ENCODE measurements at regions of chr14 and their contacts with region 1.

Region 1: GRCh38 chr14:75487155-75487671 is 35.1 kb upstream of the BATF start:
- DNase-seq: no peak
- ATAC-seq: no peak
- H3K4me3 ChIP-seq: no peak overlapping the region
- H3K27ac ChIP-seq: peak overlapping the region in 1 of 2 experiments; percentile 4; a peak in 1 of 6 replicates
- H3K4me1 ChIP-seq: peaks cover 8% of the 10 kb centered on the region; the same call in 2 of the 3 replicates
- CTCF ChIP-seq: no peak
- EP300 ChIP-seq: no peak
- POLR2A ChIP-seq: no peak
- RAD21 ChIP-seq: no peak

Region 2: GRCh38 chr14:74886001-74886400 is 601.2 kb before region 1 on chr14:
- CTCF ChIA-PET with region 1: no interaction called
- POLR2A ChIA-PET with region 1: no interaction called
- DNase-seq: no peak
- ATAC-seq: no peak
- H3K4me3 ChIP-seq: no peak overlapping the region
- H3K27ac ChIP-seq: no peak overlapping the region
- H3K4me1 ChIP-seq: peaks cover 59% of the 10 kb centered on the region
- CTCF ChIP-seq: no peak
- EP300 ChIP-seq: no peak
- POLR2A ChIP-seq: no peak
- RAD21 ChIP-seq: no peak

Region 3: GRCh38 chr14:75307700-75308379 is 179.4 kb before region 1 on chr14:
- CTCF ChIA-PET with region 1: interaction called, 216 read pairs
- POLR2A ChIA-PET with region 1: no interaction called
- DNase-seq: peak; percentile 64 to 85
- ATAC-seq: peak; percentile 89 to 91
- H3K4me3 ChIP-seq: no peak overlapping the region
- H3K27ac ChIP-seq: peak overlapping the region; percentile 51 to 66; a peak in 4 of 6 replicates
- H3K4me1 ChIP-seq: peaks cover 29% of the 10 kb centered on the region
- CTCF ChIP-seq: peak; percentile 95
- EP300 ChIP-seq: no peak
- POLR2A ChIP-seq: no peak
- RAD21 ChIP-seq: peak; percentile 95

Region 4: DNA sequence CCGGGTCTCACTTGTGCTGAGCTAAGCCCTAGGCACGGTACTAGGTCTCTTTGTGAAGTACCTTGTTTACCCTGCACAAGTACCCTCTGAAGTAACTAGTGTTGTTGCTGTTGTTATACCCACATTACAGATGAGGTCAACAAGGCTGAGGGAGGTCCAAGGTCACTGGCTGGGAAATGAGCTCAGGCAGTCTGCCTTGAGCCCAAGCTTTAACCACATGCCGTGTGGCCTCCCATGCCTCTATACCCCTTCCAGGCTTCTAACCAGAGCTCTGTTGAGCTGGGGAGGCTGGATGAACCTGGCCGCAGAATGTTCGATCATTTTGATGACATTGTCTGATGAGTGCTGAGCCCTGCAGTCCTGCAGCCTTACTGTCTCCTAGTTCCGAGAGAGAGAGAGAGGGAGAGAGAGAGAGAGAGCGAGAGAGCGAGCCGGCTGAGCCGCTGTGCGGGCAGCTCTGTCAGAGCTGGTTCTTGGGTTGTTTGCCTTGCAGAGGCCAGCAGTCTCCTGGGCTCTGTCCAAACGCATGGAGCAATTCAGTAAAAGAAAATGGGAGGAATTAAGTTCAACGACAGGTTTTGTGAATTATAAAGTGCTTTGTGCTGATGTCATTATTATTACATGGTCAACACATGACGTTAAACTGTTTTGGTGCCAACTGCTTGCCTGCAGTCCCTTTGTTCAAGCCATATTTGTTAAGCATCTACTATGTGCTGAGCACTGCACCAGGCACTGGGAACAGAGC is 46.3 kb before region 1 on chr14:
- CTCF ChIA-PET with region 1: interaction called, 10 read pairs
- POLR2A ChIA-PET with region 1: no interaction called
- DNase-seq: no peak
- ATAC-seq: no peak
- H3K4me3 ChIP-seq: no peak overlapping the region
- H3K27ac ChIP-seq: no peak overlapping the region
- H3K4me1 ChIP-seq: peaks cover 14% of the 10 kb centered on the region; the same call in 2 of the 3 replicates
- CTCF ChIP-seq: no peak
- EP300 ChIP-seq: no peak
- POLR2A ChIP-seq: no peak
- RAD21 ChIP-seq: no peak

Region 5: GRCh38 chr14:75476274-75476995 is 10.8 kb before region 1 on chr14:
- CTCF ChIA-PET with region 1: interaction called, 51 read pairs
- POLR2A ChIA-PET with region 1: no interaction called
- DNase-seq: no peak
- ATAC-seq: peak in 1 of 2 experiments; percentile 31; a peak in 3 of 6 replicates
- H3K4me3 ChIP-seq: no peak overlapping the region
- H3K27ac ChIP-seq: no peak overlapping the region
- H3K4me1 ChIP-seq: no peaks in the 10 kb centered on the region
- CTCF ChIP-seq: no peak
- EP300 ChIP-seq: no peak
- POLR2A ChIP-seq: no peak
- RAD21 ChIP-seq: no peak

Region 6: DNA sequence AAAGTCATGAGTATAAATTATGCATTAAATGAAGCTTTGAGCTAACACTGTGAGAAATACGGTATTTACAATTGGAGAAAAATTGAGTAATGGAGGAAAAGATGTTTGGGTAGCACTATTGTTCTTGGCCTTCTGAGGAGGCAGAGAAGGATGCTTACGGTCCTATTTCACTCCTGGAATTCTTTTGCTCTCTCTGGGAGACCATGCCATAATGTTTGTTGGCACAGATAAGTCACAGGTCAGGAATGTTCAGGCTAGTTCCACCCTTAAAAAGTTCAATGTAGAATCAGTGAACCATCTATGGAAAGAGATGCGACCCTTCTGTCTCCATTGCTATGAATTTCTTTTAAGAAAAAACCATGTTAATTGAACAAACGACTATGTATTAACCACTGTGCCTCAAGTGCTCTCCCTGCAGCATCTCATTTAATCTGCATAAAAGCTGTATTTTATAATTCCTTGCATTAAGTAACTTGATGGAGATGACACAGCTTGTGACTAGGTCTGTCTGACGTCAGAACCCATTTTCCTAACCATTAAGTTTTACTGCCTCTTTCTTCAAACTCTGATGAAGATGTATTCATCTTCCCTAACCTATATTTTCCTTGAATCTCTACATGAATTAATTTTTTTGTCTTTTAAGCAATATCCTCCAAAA is 44.6 kb after region 1 on chr14:
- CTCF ChIA-PET with region 1: interaction called, 35 read pairs
- POLR2A ChIA-PET with region 1: interaction called, 4 read pairs
- DNase-seq: peak; percentile 41 to 92
- ATAC-seq: peak; percentile 76 to 77
- H3K4me3 ChIP-seq: no peak overlapping the region
- H3K27ac ChIP-seq: peak overlapping the region; percentile 93 to 96
- H3K4me1 ChIP-seq: peaks cover 55% of the 10 kb centered on the region
- CTCF ChIP-seq: no peak
- EP300 ChIP-seq: peak; percentile 92 to 96; a peak in 4 of 5 replicates
- POLR2A ChIP-seq: no peak
- RAD21 ChIP-seq: peak in 1 of 2 experiments; percentile 47; a peak in 2 of 5 replicates

Region 7: DNA sequence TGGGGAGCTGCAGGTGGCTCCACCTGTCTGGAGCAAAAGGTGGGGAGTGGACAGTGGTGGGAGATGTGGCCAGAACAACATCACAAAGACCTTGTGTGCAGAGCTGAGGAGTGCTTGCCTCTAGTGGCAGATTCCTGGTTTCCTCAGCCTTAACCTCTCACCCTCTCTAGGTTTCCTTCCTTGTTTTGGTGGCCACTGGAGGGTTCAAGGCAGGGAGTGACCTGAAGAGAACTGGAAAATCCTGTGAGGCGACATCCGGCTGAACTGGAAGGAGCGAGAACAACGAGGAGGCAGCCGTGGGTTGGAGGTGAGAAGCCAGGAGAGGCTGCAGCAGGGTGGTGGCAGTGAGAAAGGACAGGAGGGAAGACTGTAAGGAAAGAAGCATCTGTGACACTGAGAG is 84.9 kb after region 1 on chr14:
- CTCF ChIA-PET with region 1: interaction called, 12 read pairs
- POLR2A ChIA-PET with region 1: no interaction called
- DNase-seq: no peak
- ATAC-seq: no peak
- H3K4me3 ChIP-seq: no peak overlapping the region
- H3K27ac ChIP-seq: no peak overlapping the region
- H3K4me1 ChIP-seq: no peaks in the 10 kb centered on the region
- CTCF ChIP-seq: no peak
- EP300 ChIP-seq: no peak
- POLR2A ChIP-seq: no peak
- RAD21 ChIP-seq: no peak

Region 8: DNA sequence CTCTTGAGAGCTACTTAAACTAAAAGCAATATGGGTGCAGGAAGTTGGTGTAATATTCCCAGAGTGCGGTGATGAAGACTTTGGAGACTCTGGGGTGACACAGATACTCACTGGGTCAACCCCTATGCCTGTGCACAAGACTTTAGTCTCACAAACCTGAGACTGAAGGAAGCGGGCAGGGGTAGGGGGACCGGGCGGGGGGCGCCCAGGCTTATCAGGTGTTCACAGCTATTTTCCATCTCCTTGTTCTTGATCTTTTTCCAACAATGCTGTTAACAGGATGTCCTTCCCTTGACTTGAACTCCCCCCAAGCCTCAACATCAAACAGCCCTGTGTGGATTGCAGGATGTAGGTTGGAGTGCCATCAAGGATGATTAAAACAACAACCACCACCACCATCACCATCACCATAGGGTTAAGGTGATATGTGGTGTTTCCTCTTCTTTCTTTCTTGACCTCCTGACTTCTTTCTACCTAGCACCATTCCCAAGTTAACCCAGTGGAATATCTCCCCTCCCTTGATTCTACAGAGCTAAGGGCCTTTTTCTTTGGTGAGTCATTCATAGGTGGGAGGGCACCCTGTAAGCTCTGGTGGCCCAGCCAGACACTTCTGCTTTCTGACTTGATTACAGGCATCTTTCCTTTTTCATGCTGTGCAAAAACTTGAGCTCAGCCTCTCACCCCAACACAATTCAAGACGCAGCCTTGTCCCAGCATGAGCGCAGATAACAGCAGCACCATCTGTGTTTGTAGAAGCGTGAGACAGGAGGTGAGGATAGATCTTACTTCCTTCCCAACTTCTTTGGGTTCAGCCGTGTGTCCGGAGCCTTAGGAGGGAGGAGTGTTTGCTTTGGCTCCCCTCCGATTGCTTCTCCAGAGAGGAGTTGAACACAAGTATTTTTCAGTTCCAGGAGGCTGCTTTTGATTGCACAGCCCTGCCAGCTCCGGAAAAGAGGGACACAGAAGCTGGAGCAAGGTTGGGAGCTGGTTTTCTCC is 117.9 kb after region 1 on chr14:
- CTCF ChIA-PET with region 1: no interaction called
- POLR2A ChIA-PET with region 1: no interaction called
- DNase-seq: no peak
- ATAC-seq: no peak
- H3K4me3 ChIP-seq: no peak overlapping the region
- H3K27ac ChIP-seq: no peak overlapping the region
- H3K4me1 ChIP-seq: peaks cover 15% of the 10 kb centered on the region
- CTCF ChIP-seq: no peak
- EP300 ChIP-seq: no peak
- POLR2A ChIP-seq: no peak
- RAD21 ChIP-seq: no peak

Region 9: DNA sequence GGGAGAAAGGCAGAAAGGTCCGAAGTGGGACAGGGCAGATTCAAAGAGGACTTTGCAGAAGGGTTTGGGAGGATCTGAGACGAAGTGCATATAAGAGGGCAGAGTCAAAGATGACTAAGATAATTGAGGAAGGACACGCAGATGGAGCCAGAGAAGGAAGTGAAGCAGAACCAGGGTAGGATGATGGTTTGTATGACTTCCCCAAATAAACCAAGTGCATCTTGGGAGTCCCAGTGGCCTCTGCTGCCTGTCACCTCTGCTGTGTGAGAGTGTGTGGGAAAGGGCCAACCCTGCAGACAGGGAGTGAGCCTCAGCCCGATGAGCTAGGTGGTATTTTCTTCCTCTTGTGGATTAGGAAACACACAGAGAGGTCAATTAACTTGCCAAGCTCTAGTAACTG is 128.0 kb after region 1 on chr14:
- CTCF ChIA-PET with region 1: no interaction called
- POLR2A ChIA-PET with region 1: no interaction called
- DNase-seq: no peak
- ATAC-seq: no peak
- H3K4me3 ChIP-seq: no peak overlapping the region
- H3K27ac ChIP-seq: no peak overlapping the region
- H3K4me1 ChIP-seq: no peaks in the 10 kb centered on the region
- CTCF ChIP-seq: no peak
- EP300 ChIP-seq: no peak
- POLR2A ChIP-seq: no peak
- RAD21 ChIP-seq: no peak